Aorta (tissue), 5 donors: ENCODE measurements at regions of chr1 and their contacts with region 1.

Region 1: GRCh38 chr1:234326497-234327366 is 46.5 kb upstream of the COA6 start:
- DNase-seq: peak in 1 of 2 donors; percentile 59
- ATAC-seq: peak; percentile 83
- H3K4me3 ChIP-seq: peak overlapping the region; percentile 9 to 36
- H3K27ac ChIP-seq: no peak overlapping the region
- H3K4me1 ChIP-seq: no peaks in the 10 kb centered on the region
- H3K27me3 ChIP-seq: no peaks in the 10 kb centered on the region

Region 2: GRCh38 chr1:234114648-234115307 is 212.0 kb before region 1 on chr1:
- intact Hi-C with region 1: loop called (anchors 5 to 10 kb)
- DNase-seq: no peak
- ATAC-seq: peak; percentile 68
- H3K4me3 ChIP-seq: peak overlapping the region in 1 of 2 donors; percentile 26
- H3K27ac ChIP-seq: no peak overlapping the region
- H3K4me1 ChIP-seq: peaks cover 0 to 4% of the 10 kb centered on the region in 2 donors
- H3K27me3 ChIP-seq: no peaks in the 10 kb centered on the region

Region 3: GRCh38 chr1:234154320-234155251 is 172.1 kb before region 1 on chr1:
- intact Hi-C with region 1: loop called in 1 of 2 experiments (anchors 2 kb)
- DNase-seq: no peak
- ATAC-seq: no peak
- H3K4me3 ChIP-seq: no peak overlapping the region
- H3K27ac ChIP-seq: no peak overlapping the region
- H3K4me1 ChIP-seq: no peaks in the 10 kb centered on the region
- H3K27me3 ChIP-seq: peaks cover 0 to 2% of the 10 kb centered on the region in 2 donors